Activated CD8-positive, alpha-beta T cell treated with anti-CD3 and anti-CD28 coated beads for 36 hours (primary cell): ENCODE measurements at regions of chr11 and their contacts with region 1.

Region 1: GRCh38 chr11:67345920-67346799 is 7.2 kb downstream of the POLD4 start:
- DNase-seq: peak; percentile 41
- ATAC-seq: peak; percentile 80
- H3K4me3 Mint-ChIP-seq: no peak overlapping the region
- H3K27ac Mint-ChIP-seq: peak overlapping the region; percentile 89
- H3K4me1 Mint-ChIP-seq: peaks cover 44% of the 10 kb centered on the region
- H3K27me3 Mint-ChIP-seq: no peaks in the 10 kb centered on the region
- CTCF ChIP-seq: peak; percentile 87

Region 2: GRCh38 chr11:66996609-66997405 is 349.4 kb before region 1 on chr11:
- CTCF ChIA-PET with region 1: no interaction called
- POLR2A ChIA-PET with region 1: no interaction called
- intact Hi-C with region 1: no loop called
- DNase-seq: no peak
- ATAC-seq: no peak
- H3K4me3 Mint-ChIP-seq: no peak overlapping the region
- H3K27ac Mint-ChIP-seq: no peak overlapping the region
- H3K4me1 Mint-ChIP-seq: no peaks in the 10 kb centered on the region
- H3K27me3 Mint-ChIP-seq: peaks cover 9% of the 10 kb centered on the region
- CTCF ChIP-seq: no peak

Region 3: DNA sequence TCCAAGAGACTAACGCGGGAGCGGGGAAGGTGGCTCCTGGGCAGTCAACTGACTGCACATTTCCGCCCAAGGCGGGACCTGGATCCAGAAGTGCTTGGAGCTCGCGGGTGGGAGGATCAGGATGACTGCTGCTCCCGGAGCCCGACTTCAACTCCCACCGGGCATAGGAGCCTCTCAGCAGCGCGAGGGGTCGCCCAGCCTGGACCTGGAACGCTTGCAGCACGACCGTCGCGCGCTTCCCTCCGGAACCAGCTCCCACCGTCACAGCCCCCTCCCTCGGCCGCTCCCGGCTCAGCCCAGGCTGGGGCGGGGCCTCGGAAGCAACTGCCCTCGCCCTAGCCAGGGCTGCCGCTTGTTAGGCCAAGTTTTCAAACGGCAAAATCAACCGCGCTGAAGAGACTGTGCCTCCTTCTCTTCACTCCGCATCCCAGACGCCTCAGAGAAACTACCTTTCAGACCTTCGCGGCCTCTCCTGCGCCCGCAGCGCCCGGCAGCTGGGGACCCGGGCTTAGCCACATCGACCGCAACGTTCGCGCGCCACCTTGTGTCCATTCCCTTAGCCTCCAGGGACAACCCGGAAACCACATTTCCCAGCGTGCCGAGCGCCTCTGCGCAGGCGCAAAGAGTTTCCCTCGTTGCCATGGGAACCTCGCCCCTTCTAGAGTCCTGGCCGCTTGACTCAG is 28.8 kb before region 1 on chr11:
- CTCF ChIA-PET with region 1: interaction called, 62 read pairs
- POLR2A ChIA-PET with region 1: interaction called, 5 read pairs
- intact Hi-C with region 1: no loop called
- DNase-seq: peak; percentile 98
- ATAC-seq: peak; percentile 91
- H3K4me3 Mint-ChIP-seq: peak overlapping the region; percentile 94
- H3K27ac Mint-ChIP-seq: peak overlapping the region; percentile 97
- H3K4me1 Mint-ChIP-seq: peaks cover 16% of the 10 kb centered on the region
- H3K27me3 Mint-ChIP-seq: no peaks in the 10 kb centered on the region
- CTCF ChIP-seq: peak; percentile 82

Region 4: DNA sequence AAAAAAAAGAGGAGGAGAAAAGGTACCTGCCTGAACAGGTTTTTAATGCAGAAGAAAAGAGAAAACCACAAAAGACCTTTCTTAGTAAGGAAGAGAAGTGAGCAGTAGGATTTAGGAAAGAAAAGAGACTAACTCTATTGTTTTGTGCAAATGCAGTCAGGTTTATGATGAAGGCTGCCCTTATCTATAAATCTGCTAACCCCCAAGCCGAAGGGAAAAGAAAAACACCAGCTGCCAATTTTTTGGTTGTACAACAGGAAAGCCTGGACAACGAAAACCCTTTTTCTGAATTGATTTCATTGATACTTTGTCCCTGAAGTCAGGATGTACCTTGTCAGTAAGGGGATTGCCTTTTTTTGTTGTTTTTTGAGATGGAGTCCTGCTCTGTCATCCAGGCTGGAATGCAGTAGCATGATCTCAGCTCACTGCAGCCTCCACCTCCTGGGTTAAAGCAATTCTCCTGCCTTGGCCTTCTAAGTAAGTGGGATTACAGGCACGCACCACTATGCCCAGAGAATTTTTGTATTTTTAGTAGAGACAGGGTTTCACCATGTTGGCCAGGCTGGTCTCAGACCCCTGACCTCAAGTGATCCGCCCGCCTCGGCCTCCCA is 14.0 kb before region 1 on chr11:
- CTCF ChIA-PET with region 1: interaction called, 62 read pairs
- POLR2A ChIA-PET with region 1: interaction called, 3 read pairs
- intact Hi-C with region 1: no loop called
- DNase-seq: no peak
- ATAC-seq: no peak
- H3K4me3 Mint-ChIP-seq: no peak overlapping the region
- H3K27ac Mint-ChIP-seq: no peak overlapping the region
- H3K4me1 Mint-ChIP-seq: no peaks in the 10 kb centered on the region
- H3K27me3 Mint-ChIP-seq: no peaks in the 10 kb centered on the region
- CTCF ChIP-seq: no peak

Region 5: GRCh38 chr11:67366546-67366945 is 20.4 kb after region 1 on chr11:
- CTCF ChIA-PET with region 1: interaction called, 883 read pairs
- POLR2A ChIA-PET with region 1: interaction called, 3 read pairs
- intact Hi-C with region 1: no loop called
- DNase-seq: no peak
- ATAC-seq: no peak
- H3K4me3 Mint-ChIP-seq: no peak overlapping the region
- H3K27ac Mint-ChIP-seq: no peak overlapping the region
- H3K4me1 Mint-ChIP-seq: peaks cover 44% of the 10 kb centered on the region
- H3K27me3 Mint-ChIP-seq: peaks cover 8% of the 10 kb centered on the region
- CTCF ChIP-seq: no peak

Region 6: GRCh38 chr11:67373925-67374618 is 27.9 kb after region 1 on chr11:
- CTCF ChIA-PET with region 1: interaction called, 883 read pairs
- POLR2A ChIA-PET with region 1: interaction called, 8 read pairs
- intact Hi-C with region 1: no loop called
- DNase-seq: peak; percentile 65
- ATAC-seq: peak; percentile 43
- H3K4me3 Mint-ChIP-seq: peak overlapping the region; percentile 78
- H3K27ac Mint-ChIP-seq: no peak overlapping the region
- H3K4me1 Mint-ChIP-seq: peaks cover 43% of the 10 kb centered on the region
- H3K27me3 Mint-ChIP-seq: peaks cover 27% of the 10 kb centered on the region
- CTCF ChIP-seq: peak; percentile 31

Region 7: DNA sequence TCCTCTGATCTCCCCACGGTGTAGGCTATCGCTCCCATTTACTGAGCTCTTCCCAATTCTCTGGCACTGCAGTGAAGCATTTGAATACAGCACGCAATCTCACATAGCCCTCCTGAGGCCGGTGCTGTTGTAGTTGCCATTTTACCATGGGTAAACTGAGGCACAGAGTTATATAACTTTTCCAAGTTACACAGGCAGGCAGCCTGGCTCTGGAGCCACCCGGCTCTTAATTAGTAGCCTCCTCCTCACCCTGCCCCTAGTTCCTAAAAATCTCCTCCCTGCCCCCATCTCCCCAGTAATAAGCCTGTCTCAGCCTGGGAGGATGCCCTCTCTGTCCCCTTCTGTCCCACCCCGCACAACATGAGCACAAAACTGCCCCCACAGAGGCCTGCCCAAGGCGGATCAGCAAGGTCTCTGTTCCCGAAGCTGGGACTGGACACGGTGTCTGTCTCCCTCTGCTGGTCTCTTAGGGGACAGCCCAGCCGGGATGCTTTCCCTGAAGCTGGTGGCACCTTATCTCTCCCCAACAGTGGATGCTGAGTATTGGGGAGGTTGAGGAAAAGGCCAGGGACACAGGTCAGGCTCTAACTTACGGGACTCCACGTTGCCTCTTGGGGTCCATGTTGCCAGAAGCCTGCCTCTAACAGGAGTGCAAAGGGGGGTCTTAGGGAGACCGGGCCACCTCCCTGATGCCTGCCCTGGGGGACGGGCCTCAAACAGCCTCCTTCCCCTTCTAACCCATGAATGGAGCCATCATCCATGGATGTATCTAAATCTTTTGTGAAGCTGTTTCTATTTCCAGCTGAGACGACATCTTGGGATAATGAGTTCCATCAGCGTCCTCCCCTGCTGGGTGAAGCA is 36.3 kb after region 1 on chr11:
- CTCF ChIA-PET with region 1: interaction called, 883 read pairs
- POLR2A ChIA-PET with region 1: interaction called, 7 read pairs
- intact Hi-C with region 1: no loop called
- DNase-seq: peak; percentile 90
- ATAC-seq: peak; percentile 95
- H3K4me3 Mint-ChIP-seq: no peak overlapping the region
- H3K27ac Mint-ChIP-seq: no peak overlapping the region
- H3K4me1 Mint-ChIP-seq: peaks cover 2% of the 10 kb centered on the region
- H3K27me3 Mint-ChIP-seq: no peaks in the 10 kb centered on the region
- CTCF ChIP-seq: peak; percentile 94

Region 8: GRCh38 chr11:67391304-67392132 is 45.4 kb after region 1 on chr11 and contains the start of gene RAD9A:
- CTCF ChIA-PET with region 1: interaction called, 883 read pairs
- POLR2A ChIA-PET with region 1: interaction called, 7 read pairs
- intact Hi-C with region 1: no loop called
- DNase-seq: peak; percentile 96
- ATAC-seq: peak; percentile 77
- H3K4me3 Mint-ChIP-seq: peak within 1 kb of the TSS; percentile 92
- H3K27ac Mint-ChIP-seq: peak within 1 kb of the TSS; percentile 77
- H3K4me1 Mint-ChIP-seq: peaks cover 30% of the 10 kb centered on the region
- H3K27me3 Mint-ChIP-seq: no peaks in the 10 kb centered on the region
- CTCF ChIP-seq: no peak
- total RNA-seq, gene RAD9A: 29.7 to 30.6 TPM

Region 9: DNA sequence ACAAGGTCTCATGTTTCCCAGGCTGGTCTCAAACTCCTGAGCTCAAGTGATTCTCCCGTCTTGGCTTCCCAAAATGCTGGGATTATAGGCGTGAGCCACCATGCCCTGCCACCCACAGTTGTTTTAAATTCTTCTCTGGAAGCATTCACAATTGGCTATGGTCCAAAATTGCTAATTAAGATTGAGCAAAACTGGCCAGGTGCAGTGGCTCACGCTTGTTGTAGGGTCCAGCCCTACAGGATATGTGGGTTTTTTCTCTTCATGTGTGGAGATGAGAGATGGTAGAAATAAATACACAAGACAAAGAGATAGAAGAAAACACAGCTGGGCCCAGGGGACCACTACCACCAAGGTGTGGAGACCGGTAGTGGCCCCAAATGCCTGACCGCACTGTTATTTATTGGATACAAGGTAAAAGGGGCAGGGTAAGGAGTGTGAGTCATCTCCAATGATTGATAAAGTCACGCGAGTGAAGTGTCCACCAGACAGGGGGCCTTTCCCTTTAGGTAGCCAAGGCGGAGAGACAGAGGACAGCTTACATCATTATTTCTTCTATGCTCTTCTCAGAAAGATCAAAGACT is 312.6 kb after region 1 on chr11:
- CTCF ChIA-PET with region 1: no interaction called
- POLR2A ChIA-PET with region 1: no interaction called
- intact Hi-C with region 1: no loop called
- DNase-seq: no peak
- ATAC-seq: no peak
- H3K4me3 Mint-ChIP-seq: no peak overlapping the region
- H3K27ac Mint-ChIP-seq: no peak overlapping the region
- H3K4me1 Mint-ChIP-seq: no peaks in the 10 kb centered on the region
- H3K27me3 Mint-ChIP-seq: no peaks in the 10 kb centered on the region
- CTCF ChIP-seq: no peak